Mammary epithelial cell (primary cell): ENCODE measurements at regions of chr6 and their contacts with region 1.

Region 1: DNA sequence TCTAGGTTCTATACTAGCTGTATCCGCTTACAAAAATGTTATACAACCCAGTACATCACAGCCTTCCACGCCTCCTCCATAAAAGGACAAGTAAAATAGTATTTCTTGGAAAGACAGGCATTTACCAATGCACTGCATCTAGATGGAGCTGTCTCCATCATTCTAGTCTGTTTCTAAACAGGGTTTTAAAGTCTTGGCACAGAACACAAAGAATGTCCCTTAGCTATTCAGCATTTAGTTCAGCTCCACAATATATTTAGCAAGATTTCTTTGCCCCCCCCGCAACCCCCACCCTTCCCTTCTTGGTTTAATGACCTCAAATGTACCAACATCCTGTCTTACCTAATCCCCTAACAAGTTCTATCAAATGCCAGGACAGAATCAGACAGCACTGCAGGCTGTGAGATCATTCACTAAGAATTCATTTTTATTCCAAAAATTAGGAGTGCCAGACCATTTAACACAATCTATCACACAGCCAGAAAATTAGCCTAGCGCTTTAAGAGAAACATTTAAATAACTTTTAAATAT is 198.6 kb downstream of the BACH2 start:
- DNase-seq: peak; percentile 98
- H3K4me3 ChIP-seq: no peak overlapping the region
- H3K27ac ChIP-seq: peak overlapping the region; percentile 94
- H3K4me1 ChIP-seq: peaks cover 26% of the 10 kb centered on the region
- H3K27me3 ChIP-seq: no peaks in the 10 kb centered on the region
- CTCF ChIP-seq: peak; percentile 53 to 68

Region 2: DNA sequence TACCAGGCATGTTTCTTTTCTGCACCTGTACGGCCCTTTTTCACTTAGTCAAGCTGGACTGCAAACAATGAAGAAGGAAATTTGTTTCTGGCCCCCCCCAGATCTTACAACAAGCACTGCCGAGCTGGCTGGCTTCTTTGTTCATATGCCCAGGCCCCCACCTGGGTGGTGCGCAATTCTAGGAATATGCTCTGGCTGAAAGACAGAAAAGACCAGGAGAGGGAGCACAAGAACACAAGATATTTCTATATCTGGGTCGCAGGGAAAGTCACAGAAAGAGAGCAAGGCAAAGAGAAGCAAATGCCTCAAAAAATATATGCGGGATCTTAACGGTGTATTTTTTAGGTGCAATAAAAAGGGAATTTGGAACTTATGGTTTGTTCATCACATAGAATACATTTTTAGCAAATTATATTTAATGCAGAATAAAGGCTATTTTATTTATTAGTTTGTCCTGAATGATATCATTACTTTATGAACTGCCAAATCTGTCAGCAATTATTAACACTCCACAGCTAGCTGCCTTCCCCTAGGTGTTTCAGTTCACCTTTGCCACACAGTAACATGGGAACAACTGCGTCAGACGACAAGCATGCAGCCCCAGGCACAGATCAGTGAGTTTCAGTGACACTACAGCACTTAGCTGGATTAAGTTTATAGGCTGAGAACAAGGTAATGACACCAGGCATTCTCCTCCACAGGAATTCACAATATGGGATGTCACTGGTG is 127.3 kb before region 1 on chr6:
- CTCF ChIA-PET with region 1: no interaction called
- dilution Hi-C with region 1: no loop called
- in situ Hi-C with region 1: no loop called
- intact Hi-C with region 1: loop called (anchors 1 kb)
- DNase-seq: peak; percentile 45
- H3K4me3 ChIP-seq: no peak overlapping the region
- H3K27ac ChIP-seq: no peak overlapping the region
- H3K4me1 ChIP-seq: peaks cover 6% of the 10 kb centered on the region
- H3K27me3 ChIP-seq: no peaks in the 10 kb centered on the region
- CTCF ChIP-seq: peak; percentile 54 to 64

Region 3: GRCh38 chr6:90088009-90088408 is 10.1 kb before region 1 on chr6:
- CTCF ChIA-PET with region 1: interaction called, 4 read pairs
- dilution Hi-C with region 1: no loop called
- in situ Hi-C with region 1: no loop called
- intact Hi-C with region 1: loop called (anchors 1 kb)
- DNase-seq: peak; percentile 97
- H3K4me3 ChIP-seq: no peak overlapping the region
- H3K27ac ChIP-seq: peak overlapping the region; percentile 72
- H3K4me1 ChIP-seq: peaks cover 31% of the 10 kb centered on the region
- H3K27me3 ChIP-seq: no peaks in the 10 kb centered on the region
- CTCF ChIP-seq: no peak

Region 4: GRCh38 chr6:90179190-90180169 is 81.4 kb after region 1 on chr6:
- CTCF ChIA-PET with region 1: interaction called, 3 read pairs
- dilution Hi-C with region 1: loop called (anchors 5 kb)
- in situ Hi-C with region 1: no loop called
- intact Hi-C with region 1: loop called (anchors 2 kb)
- DNase-seq: no peak
- H3K4me3 ChIP-seq: no peak overlapping the region
- H3K27ac ChIP-seq: no peak overlapping the region
- H3K4me1 ChIP-seq: peaks cover 17% of the 10 kb centered on the region
- H3K27me3 ChIP-seq: no peaks in the 10 kb centered on the region
- CTCF ChIP-seq: peak; percentile 40 to 43

Region 5: GRCh38 chr6:90285611-90286381 is 187.7 kb after region 1 on chr6:
- CTCF ChIA-PET with region 1: no interaction called
- dilution Hi-C with region 1: no loop called
- in situ Hi-C with region 1: no loop called
- intact Hi-C with region 1: loop called (anchors 1 kb)
- DNase-seq: peak; percentile 92
- H3K4me3 ChIP-seq: no peak overlapping the region
- H3K27ac ChIP-seq: peak overlapping the region; percentile 90
- H3K4me1 ChIP-seq: peaks cover 24% of the 10 kb centered on the region
- H3K27me3 ChIP-seq: no peaks in the 10 kb centered on the region
- CTCF ChIP-seq: no peak

Region 6: DNA sequence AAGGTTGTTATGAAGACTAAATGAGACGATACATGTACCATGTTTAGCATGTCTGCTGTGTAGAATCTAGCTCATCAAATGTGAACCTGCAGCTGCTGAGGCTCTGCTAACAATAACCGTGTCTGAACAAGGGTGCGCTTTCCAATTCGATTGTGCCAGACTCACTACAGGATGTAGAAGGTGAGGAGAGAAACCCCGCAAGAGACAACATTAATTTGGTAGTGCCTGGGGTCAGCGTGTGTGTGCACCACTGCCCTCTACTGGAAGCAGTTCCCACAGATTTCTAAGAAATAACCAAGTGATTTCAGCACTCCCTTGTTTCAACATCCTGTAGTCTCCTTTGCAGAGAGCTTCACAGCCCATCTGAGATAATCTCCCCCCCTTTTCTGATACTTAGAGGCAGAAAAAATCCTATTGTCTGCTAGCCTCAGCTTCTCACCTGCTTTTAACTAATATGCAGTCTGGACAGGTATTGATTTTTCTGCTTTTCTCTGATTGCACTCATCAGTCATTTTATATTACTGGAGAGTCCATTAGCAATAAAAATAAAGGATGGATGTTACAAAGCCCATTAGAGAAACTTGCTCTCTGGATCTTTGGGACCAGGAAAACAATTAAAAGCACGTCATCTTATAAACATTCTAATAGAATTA is 295.3 kb after region 1 on chr6:
- CTCF ChIA-PET with region 1: no interaction called
- dilution Hi-C with region 1: no loop called
- in situ Hi-C with region 1: no loop called
- intact Hi-C with region 1: loop called (anchors 5 kb)
- DNase-seq: peak; percentile 57
- H3K4me3 ChIP-seq: no peak overlapping the region
- H3K27ac ChIP-seq: no peak overlapping the region
- H3K4me1 ChIP-seq: no peaks in the 10 kb centered on the region
- H3K27me3 ChIP-seq: no peaks in the 10 kb centered on the region
- CTCF ChIP-seq: peak; percentile 75 to 80